H1 (cell line): ENCODE measurements at regions of chr6 and their contacts with region 1.

Region 1: DNA sequence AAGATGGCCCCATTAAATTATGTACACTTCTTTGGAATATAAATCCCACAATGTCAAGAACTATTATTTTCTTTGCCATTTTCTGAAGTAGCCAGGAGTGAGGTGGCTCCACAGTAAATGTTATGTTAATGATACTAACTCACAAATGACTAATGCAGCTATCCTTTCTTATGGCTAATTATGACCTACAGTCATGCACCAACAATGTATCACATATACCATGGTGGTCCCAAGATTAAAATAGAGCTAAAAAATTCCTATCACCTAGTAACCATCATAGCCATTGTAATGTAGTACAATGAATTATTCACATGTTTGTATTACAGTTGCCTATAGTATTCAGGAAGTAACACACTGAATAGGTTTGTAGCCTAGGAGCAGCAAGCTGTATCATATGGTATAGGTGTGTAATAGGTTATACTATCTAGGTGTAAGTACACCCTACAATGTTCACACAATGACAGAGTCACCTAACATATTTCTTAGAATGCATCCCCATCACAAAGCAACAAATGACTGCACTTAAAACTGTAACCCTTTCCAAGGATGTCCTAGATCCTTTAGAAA is 15.3 kb downstream of the ECHDC1 start:
- DNase-seq: no peak
- H3K4me3 ChIP-seq: no peak overlapping the region
- H3K27ac ChIP-seq: no peak overlapping the region
- H3K4me1 ChIP-seq: peaks cover 0 to 4% (median 0%) of the 10 kb centered on the region in 4 experiments; a peak in 1 of 7 replicates
- H3K27me3 ChIP-seq: no peaks in the 10 kb centered on the region
- CTCF ChIP-seq: no peak
- EP300 ChIP-seq: no peak
- POLR2A ChIP-seq: no peak
- RAD21 ChIP-seq: no peak

Region 2: DNA sequence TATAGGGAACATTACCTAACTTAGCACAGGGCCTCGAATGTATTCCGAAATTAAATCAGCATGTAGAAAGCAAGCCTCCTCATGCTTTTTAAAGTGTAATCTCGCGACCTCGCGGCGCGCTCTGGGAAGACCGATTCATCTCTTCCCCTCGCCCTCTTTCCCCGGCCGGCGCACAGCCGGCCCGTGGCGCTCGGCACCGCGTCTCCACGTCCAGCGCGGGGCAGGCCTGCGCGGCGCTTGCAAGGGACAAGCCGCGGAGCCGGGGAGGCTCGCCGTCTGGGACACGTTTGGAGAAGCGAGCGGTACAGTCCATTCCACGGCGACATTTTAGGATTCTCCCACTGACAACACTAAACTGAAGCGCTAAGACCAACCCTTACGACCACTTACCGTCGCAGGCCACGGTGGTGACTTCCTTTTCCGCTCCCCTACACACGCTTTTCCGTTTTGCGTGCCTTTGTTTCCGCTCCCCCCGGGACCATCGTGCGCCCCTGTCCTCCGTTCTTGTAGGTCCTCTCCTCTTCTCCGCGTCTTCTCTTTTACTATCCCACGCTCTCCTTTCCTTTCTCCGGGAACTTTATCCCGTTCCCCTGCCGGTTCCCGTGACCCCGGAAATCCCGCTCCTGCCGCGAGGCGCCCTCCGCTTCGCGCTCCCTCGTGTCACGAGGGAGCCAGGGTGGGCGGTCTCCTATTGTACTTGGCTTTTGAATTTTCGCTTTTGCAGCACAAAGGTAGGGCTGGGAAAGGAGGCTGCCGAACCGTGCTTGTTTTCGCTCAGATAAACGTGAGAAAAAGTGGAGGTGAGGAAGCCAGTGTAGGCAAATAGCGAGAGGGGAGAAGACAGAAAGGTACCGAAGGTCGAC is 15.1 kb after region 1 on chr6 and contains the start of gene ECHDC1:
- CTCF ChIA-PET with region 1: interaction called, 6 read pairs
- POLR2A ChIA-PET with region 1: interaction called, 24 read pairs
- DNase-seq: peak in 1 of 2 experiments; percentile 66
- H3K4me3 ChIP-seq: peak within 1 kb of the TSS; percentile 73 to 92 (median 84)
- H3K27ac ChIP-seq: peak within 1 kb of the TSS; percentile 78
- H3K4me1 ChIP-seq: peaks cover 0 to 7% (median 3%) of the 10 kb centered on the region in 4 experiments; a peak in 4 of 7 replicates
- H3K27me3 ChIP-seq: no peaks in the 10 kb centered on the region; a peak in 1 of 7 replicates
- CTCF ChIP-seq: no peak
- EP300 ChIP-seq: no peak
- POLR2A ChIP-seq: peak; percentile 32 to 41; a peak in 2 of 3 replicates
- RAD21 ChIP-seq: no peak
- total RNA-seq, gene ECHDC1: 60.5 and 64.8 TPM in 2 replicates